ENCODE measurements at regions of chr1 and their contacts with region 1.

Region 1: GRCh38 chr1:239662950-239663349 is 276.6 kb downstream of the CHRM3 start:
- DNase-seq: no peak
- ATAC-seq: no peak
- H3K4me3 ChIP-seq: no peak overlapping the region
- H3K27ac ChIP-seq: no peak overlapping the region
- H3K4me1 ChIP-seq: no peaks in the 10 kb centered on the region
- H3K27me3 ChIP-seq: no peaks in the 10 kb centered on the region
- CTCF ChIP-seq: no peak

Region 2: GRCh38 chr1:239606850-239607400 is 56.0 kb before region 1 on chr1:
- intact Hi-C with region 1: loop called in 1 of 2 experiments (anchors 10 kb)
- DNase-seq: no peak
- ATAC-seq: no peak
- H3K4me3 ChIP-seq: no peak overlapping the region
- H3K27ac ChIP-seq: no peak overlapping the region
- H3K4me1 ChIP-seq: no peaks in the 10 kb centered on the region
- H3K27me3 ChIP-seq: no peaks in the 10 kb centered on the region
- CTCF ChIP-seq: no peak